HEK293 (cell line): ENCODE measurements at regions of chr2 and their contacts with region 1.

Region 1: DNA sequence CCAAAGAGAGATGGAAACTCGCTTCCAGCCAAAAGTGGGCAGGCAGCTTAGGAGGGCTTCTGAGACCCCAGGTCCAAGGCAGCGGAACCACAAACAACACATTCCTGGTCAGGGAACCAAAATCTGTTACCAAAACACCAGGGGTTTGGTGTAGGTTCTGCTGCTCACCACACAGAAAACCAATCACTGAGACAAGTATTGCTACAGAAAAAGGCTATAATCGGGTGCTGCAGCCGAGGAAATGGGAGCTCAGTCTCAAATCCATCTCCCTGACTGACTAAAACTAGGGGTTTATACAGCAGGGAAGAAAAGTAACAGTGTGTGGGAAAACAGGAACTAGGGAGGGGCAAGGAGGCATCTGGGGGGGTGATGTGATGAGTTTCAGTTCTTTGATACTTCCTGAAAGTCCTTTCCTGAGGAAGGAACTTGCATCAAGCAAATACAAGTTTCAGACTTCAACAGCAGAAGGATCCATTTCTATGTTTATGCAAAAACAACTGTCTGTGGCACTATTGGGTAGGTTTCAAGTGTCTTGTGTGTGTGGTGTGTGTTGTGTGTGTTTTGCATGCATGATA is 108.0 kb downstream of the FAM168B start:
- H3K4me3 ChIP-seq: no peak overlapping the region
- H3K27ac ChIP-seq: no peak overlapping the region
- H3K4me1 ChIP-seq: no peaks in the 10 kb centered on the region
- CTCF ChIP-seq: no peak

Region 2: DNA sequence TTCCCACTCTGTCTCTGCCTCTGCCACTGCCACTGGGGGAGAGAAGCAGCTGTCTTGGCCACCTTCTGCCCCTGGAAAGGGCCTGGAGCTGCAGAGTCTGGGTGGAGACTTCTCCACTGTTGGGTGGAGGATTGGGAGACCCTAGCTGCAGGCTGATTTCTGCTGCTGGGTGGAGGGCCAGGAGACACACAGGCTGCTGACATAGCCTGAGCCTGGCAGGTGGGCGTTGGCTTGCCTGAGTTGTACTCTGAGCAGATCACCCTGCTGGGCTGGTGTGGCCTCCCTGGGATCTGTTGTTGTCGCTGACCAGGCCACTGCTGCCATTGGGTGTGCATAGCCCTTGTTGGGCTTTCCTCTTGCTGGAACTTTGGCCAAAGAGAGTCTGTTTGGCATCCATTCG is 84.2 kb before region 1 on chr2:
- CTCF ChIA-PET with region 1: interaction called, 10 read pairs
- POLR2A ChIA-PET with region 1: no interaction called
- H3K4me3 ChIP-seq: no peak overlapping the region
- H3K27ac ChIP-seq: no peak overlapping the region
- H3K4me1 ChIP-seq: no peaks in the 10 kb centered on the region
- CTCF ChIP-seq: no peak

Region 3: GRCh38 chr2:130963849-130964793 is 21.2 kb before region 1 on chr2:
- CTCF ChIA-PET with region 1: interaction called, 10 read pairs
- POLR2A ChIA-PET with region 1: no interaction called
- H3K4me3 ChIP-seq: peak overlapping the region; percentile 43
- H3K27ac ChIP-seq: no peak overlapping the region
- H3K4me1 ChIP-seq: no peaks in the 10 kb centered on the region
- CTCF ChIP-seq: peak; percentile 93

Region 4: DNA sequence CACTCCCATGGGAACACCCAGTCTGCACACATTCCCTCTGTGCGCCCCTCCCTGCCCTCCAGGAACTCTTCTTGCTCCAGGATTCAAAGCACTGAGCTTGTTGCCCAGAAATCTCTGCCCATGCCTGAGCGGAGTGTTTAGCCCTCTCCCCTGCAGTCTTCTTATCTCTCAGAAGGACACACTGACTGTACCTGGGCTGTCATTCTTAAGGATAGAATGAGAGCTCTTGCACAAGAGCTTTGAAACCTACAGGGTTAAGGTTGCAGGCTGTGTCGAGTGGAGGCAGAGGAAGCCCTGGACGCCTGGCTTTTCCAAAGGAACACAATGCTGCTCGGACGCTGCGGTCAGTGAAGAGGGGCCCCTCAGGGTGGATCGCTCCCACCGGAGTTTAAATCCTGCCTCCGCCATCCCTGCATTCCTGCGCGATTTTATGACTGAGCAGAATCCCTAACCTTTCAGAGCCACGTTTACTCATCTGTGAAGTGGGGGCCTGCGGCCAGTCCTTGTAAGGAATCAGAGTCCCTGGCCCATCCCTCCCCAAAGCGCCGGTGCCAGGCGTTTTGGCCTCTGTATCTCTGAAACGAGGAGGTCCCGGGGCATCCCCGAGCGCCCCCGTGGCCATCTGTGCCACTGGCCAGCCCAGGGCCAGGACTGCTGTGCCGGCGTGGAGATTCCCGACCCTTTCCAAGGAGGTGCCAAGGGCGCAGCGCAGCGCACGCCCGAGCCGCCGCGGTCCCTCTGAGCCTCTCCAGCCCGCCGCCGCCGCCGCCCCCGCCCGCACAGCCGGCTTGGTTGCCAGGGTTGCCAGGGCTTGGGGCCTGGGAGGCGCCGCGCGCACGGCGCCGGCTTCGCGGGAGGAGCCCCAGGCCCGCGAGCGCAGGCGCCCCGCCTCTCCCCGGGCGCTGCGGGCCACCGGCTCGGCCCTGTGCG is 49.1 kb after region 1 on chr2:
- CTCF ChIA-PET with region 1: no interaction called
- POLR2A ChIA-PET with region 1: no interaction called
- H3K4me3 ChIP-seq: peak overlapping the region; percentile 25
- H3K27ac ChIP-seq: no peak overlapping the region; the same call in 1 of the 2 replicates
- H3K4me1 ChIP-seq: no peaks in the 10 kb centered on the region; the same call in 1 of the 2 replicates
- CTCF ChIP-seq: no peak